ENCODE measurements at regions of chr2 and their contacts with region 1.

Region 1: DNA sequence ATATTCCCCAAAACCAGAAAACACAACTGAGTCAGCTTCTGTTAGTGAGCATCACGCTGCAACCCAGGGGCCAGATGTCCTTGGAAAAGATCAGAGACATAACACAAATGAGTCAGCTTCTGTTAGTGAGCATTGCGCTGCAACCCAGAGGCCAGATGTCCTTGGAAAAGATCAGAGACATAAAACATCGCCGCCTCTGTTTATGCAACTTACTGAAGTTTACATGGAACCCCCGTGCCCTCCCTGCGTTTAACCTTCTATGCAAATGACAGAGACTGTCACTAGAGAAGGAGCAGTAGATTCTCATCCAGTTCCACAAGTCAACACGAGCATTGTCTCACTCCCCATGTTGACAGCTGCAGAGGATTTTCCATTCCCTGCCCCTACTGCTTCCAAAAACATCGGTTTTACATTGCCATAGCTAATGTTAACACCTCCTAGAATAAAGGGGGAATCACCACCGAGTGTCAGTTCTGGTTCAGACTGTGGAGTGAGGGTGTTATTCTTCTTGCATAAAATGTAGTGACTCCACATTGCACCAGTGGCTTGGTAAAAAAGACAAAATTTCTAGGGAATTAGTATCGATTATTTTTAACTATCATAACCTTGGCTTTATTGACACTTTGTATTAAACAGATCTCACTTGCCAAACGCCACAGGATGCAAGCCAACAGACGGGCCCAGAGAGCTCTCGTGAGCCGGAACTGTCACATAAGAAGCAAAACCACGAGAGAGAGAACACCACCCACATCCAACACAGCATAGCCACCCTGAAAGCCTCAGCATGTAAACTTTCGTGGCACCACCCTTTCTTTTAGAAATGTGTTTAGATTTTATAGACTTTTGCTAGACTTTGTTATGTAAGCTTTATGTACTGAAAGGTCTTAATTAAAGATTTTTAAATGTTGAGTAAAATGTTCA is 87.7 kb downstream of the SH3YL1 start:
- DNase-seq: peak; percentile 85
- H3K4me3 Mint-ChIP-seq: peak overlapping the region; percentile 36
- H3K27ac Mint-ChIP-seq: no peak overlapping the region
- H3K4me1 Mint-ChIP-seq: peaks cover 16% of the 10 kb centered on the region
- H3K27me3 Mint-ChIP-seq: peaks cover 26% of the 10 kb centered on the region

Region 2: GRCh38 chr2:162473-163382 is 13.4 kb before region 1 on chr2:
- intact Hi-C with region 1: no loop called
- DNase-seq: no peak
- H3K4me3 Mint-ChIP-seq: no peak overlapping the region
- H3K27ac Mint-ChIP-seq: no peak overlapping the region
- H3K4me1 Mint-ChIP-seq: no peaks in the 10 kb centered on the region
- H3K27me3 Mint-ChIP-seq: peaks cover 6% of the 10 kb centered on the region

Region 3: GRCh38 chr2:290090-290722 is 114.1 kb after region 1 on chr2:
- intact Hi-C with region 1: loop called (anchors 2 kb)
- DNase-seq: peak; percentile 80
- H3K4me3 Mint-ChIP-seq: peak overlapping the region; percentile 64
- H3K27ac Mint-ChIP-seq: no peak overlapping the region
- H3K4me1 Mint-ChIP-seq: peaks cover 4% of the 10 kb centered on the region
- H3K27me3 Mint-ChIP-seq: peaks cover 48% of the 10 kb centered on the region